AG04450 (cell line): ENCODE measurements at regions of chr6 and their contacts with region 1.

Region 1: DNA sequence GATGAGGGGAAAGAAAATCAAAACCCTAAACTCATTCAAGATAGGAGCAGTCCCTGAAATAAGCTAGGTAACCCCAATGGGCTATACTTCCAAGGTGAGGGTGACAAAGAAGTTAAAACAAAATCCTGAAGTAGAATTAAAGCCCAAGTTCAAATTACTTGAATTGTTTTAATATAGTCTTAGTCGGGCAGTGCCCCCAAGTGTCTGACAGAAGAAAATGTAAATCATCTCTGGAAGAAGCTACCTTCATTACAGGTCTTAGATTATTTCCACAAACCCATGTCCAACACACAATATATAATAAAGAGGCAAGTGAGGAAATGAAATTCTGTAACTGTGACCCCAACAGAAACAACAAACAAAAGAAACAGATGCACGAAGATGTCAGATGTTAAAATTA is 36.8 kb upstream of the L3MBTL3 start:
- DNase-seq: no peak
- H3K4me3 ChIP-seq: no peak overlapping the region
- H3K27ac ChIP-seq: no peak overlapping the region
- H3K27me3 ChIP-seq: no peaks in the 10 kb centered on the region
- CTCF ChIP-seq: peak; percentile 29; the same call in 1 of the 2 replicates

Region 2: DNA sequence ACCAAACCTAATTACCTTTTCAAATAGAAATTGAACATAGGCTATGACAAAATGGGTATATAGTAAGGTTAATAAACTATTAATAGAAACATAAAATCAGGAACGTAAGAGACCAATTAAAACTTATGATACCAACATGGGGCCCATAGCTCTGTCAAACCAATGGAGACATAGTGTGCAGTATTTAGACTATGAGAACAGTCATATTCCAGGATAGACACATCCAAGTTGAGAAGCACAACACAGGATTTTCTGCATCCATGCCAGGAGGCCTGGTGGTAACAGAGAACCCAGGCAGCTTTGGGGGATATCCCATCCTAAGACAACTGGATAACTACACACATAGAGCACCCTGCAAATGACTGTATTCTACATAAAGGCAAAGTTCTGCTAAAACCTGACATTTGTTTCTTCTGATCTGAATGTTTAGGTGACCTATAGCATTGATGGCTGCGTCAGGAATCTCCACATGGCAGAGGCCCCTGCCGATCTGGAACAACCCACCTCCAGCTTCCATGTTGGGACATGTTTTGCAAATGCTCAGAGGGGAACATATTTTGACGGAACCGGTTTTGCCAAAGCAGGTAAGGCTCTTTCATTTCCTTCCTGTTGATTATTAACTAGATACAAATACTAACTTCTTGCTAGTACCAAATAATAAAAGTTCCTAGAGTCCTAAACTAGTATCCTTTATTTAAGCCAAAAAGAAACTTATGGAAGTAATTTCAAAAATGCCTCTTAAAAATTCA is 474.4 kb before region 1 on chr6:
- CTCF ChIA-PET with region 1: no interaction called
- POLR2A ChIA-PET with region 1: no interaction called
- DNase-seq: no peak
- H3K4me3 ChIP-seq: no peak overlapping the region
- H3K27ac ChIP-seq: no peak overlapping the region
- H3K27me3 ChIP-seq: no peaks in the 10 kb centered on the region
- CTCF ChIP-seq: no peak

Region 3: GRCh38 chr6:129967427-129967826 is 14.2 kb before region 1 on chr6:
- CTCF ChIA-PET with region 1: interaction called, 11 read pairs
- POLR2A ChIA-PET with region 1: no interaction called
- DNase-seq: no peak
- H3K4me3 ChIP-seq: no peak overlapping the region
- H3K27ac ChIP-seq: no peak overlapping the region
- H3K27me3 ChIP-seq: peaks cover 6% of the 10 kb centered on the region
- CTCF ChIP-seq: no peak